ENCODE measurements at regions of chr17 and their contacts with region 1.

Region 1: DNA sequence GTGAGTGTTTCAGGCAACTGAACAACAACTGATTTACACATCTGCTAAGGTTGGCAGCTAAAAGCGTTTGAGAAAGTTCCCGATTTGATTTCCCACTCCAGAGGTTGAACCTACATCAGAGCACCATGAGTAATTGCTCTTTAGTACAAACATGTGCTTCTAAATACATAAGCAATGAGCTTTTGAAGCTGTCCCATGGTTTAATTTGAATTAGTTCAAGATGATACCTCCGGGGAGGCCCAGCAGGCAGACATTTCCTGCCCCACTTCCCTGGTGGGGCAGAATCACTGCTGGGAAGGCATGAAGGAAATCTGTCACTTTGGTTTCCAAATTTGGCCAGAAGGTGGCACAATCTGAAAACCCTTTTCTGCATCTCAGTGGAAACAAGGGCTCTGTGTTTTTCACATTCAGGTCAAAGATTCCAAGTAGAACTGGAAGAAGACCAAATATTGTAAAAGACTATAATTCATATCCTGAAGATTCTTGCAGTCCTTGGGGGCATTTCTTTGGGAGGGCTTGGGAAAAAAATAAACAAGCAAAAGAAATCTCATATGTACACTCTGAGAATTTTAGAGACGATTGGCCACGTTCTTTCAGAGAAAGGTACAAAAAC is 176.2 kb upstream of the FAM20A start:
- DNase-seq: peak; percentile 88
- ATAC-seq: peak; percentile 78
- H3K4me3 ChIP-seq: peak overlapping the region; percentile 24 to 58 (median 43); a peak in 5 of 6 replicates
- H3K27ac ChIP-seq: peak overlapping the region; percentile 75
- H3K4me1 ChIP-seq: peaks cover 63% of the 10 kb centered on the region
- H3K27me3 ChIP-seq: no peaks in the 10 kb centered on the region
- CTCF ChIP-seq: peak; percentile 92
- EP300 ChIP-seq: peak in 1 of 2 experiments; percentile 53; a peak in 1 of 4 replicates
- POLR2A ChIP-seq: no peak
- RAD21 ChIP-seq: peak; percentile 93

Region 2: DNA sequence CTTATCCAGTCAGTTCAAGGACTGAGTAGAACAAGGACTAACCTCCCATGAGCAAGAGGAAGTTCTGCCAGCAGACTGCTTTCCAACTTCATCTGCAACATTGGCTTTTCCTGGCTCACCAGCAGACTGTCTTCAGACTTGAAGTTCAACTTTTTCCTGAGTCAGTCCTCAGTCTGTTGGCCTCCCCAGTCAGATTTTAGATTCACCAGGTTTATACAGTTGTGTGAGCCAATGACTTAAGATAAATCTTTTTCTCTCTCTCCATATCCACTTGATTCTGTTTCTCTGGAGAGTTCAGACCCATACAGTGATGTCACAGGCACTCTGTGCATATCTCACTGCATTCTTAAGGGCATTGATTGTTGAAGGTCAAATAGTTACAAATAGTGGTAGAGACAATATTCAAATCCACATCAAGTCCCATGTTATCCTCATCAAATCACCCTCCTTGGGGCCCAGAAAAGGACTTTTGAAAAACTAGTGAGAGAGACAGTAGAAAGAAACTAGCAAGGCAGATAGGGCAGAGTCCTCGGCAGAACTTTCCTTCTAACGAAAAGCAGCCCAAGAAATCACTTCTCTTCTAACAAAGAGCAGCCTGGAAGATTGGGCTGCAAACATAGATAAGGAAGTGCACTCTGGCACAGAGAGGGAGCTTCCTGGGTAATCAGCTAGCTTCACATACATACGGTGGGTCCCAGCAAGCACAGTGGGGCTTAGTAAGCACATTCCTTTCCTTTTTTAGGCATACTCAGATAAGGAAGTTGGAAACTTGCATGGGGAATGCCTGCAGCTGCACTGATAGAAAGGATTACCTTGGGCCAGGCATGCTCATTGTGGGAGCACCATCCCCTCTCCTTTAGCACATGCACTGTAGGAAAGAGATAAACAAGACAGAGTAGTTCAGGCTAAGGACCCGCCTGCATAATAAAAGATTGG is 43.8 kb before region 1 on chr17:
- CTCF ChIA-PET with region 1: no interaction called
- POLR2A ChIA-PET with region 1: no interaction called
- in situ Hi-C with region 1: no loop called
- intact Hi-C with region 1: no loop called
- DNase-seq: peak; percentile 83
- ATAC-seq: peak; percentile 98
- H3K4me3 ChIP-seq: no peak overlapping the region
- H3K27ac ChIP-seq: no peak overlapping the region
- H3K4me1 ChIP-seq: peaks cover 34% of the 10 kb centered on the region
- H3K27me3 ChIP-seq: no peaks in the 10 kb centered on the region; a peak in 1 of 5 replicates
- CTCF ChIP-seq: no peak
- EP300 ChIP-seq: 0 out of 4 replicates have a peak, but pooled peaks of 1 of the 2 experiments have one; percentile 39
- POLR2A ChIP-seq: no peak
- RAD21 ChIP-seq: no peak

Region 3: GRCh38 chr17:68759343-68760132 is 17.8 kb before region 1 on chr17:
- CTCF ChIA-PET with region 1: no interaction called
- POLR2A ChIA-PET with region 1: no interaction called
- in situ Hi-C with region 1: no loop called
- intact Hi-C with region 1: no loop called
- DNase-seq: peak; percentile 91
- ATAC-seq: peak; percentile 99
- H3K4me3 ChIP-seq: peak overlapping the region; percentile 60 to 67 (median 61)
- H3K27ac ChIP-seq: peak overlapping the region; percentile 92
- H3K4me1 ChIP-seq: peaks cover 35% of the 10 kb centered on the region
- H3K27me3 ChIP-seq: 0 out of 5 replicates have a peak, but pooled peaks cover 0 to 4% of the 10 kb centered on the region in 2 experiments
- CTCF ChIP-seq: peak; percentile 97
- EP300 ChIP-seq: peak in 1 of 2 experiments; percentile 58; a peak in 2 of 4 replicates
- POLR2A ChIP-seq: peak; percentile 63 to 90; a peak in 3 of 4 replicates
- RAD21 ChIP-seq: peak; percentile 97

Region 4: GRCh38 chr17:68821860-68822696 is 44.7 kb after region 1 on chr17:
- CTCF ChIA-PET with region 1: interaction called, 3 read pairs
- POLR2A ChIA-PET with region 1: interaction called, 32 read pairs
- in situ Hi-C with region 1: no loop called
- intact Hi-C with region 1: loop called (anchors 1 kb)
- DNase-seq: peak; percentile 99
- ATAC-seq: peak; percentile 85
- H3K4me3 ChIP-seq: peak overlapping the region in 2 of 3 experiments; percentile 53 to 57; a peak in 3 of 6 replicates
- H3K27ac ChIP-seq: peak overlapping the region; percentile 91
- H3K4me1 ChIP-seq: peaks cover 79% of the 10 kb centered on the region
- H3K27me3 ChIP-seq: no peaks in the 10 kb centered on the region
- CTCF ChIP-seq: no peak
- EP300 ChIP-seq: peak; percentile 81 to 97; a peak in 3 of 4 replicates
- POLR2A ChIP-seq: no peak
- RAD21 ChIP-seq: no peak

Region 5: GRCh38 chr17:68909066-68909465 is 131.7 kb after region 1 on chr17:
- CTCF ChIA-PET with region 1: interaction called, 15 read pairs
- POLR2A ChIA-PET with region 1: interaction called, 8 read pairs
- in situ Hi-C with region 1: loop called (anchors 5 kb)
- intact Hi-C with region 1: loop called (anchors 1 kb)
- DNase-seq: peak; percentile 16
- ATAC-seq: no peak
- H3K4me3 ChIP-seq: no peak overlapping the region
- H3K27ac ChIP-seq: peak overlapping the region; percentile 72
- H3K4me1 ChIP-seq: peaks cover 54% of the 10 kb centered on the region
- H3K27me3 ChIP-seq: no peaks in the 10 kb centered on the region
- CTCF ChIP-seq: no peak
- EP300 ChIP-seq: no peak
- POLR2A ChIP-seq: no peak
- RAD21 ChIP-seq: no peak

Region 6: DNA sequence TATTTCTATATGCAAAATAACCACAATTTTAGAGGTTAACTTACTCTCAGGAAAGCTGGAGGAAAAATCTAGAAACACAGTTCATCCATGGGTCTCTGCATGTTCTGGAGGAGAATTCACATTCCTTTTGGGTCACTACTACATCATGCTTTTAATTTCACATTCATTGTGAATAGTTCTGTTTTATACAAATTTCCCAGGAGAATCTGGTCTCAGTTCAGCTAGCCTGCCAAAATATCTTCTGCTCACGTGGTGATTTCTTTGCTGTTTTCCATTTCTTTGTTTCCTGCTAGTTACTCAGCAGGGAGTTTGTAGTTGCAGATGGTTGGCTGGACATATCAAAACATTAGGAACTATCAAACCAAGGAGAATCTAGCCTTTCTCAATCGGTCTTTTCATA is 283.5 kb after region 1 on chr17 and contains the start of gene ABCA9:
- CTCF ChIA-PET with region 1: interaction called, 4 read pairs
- POLR2A ChIA-PET with region 1: no interaction called
- in situ Hi-C with region 1: loop called (anchors 25 kb)
- intact Hi-C with region 1: no loop called
- DNase-seq: no peak
- ATAC-seq: no peak
- H3K4me3 ChIP-seq: no peak within 1 kb of the TSS
- H3K27ac ChIP-seq: no peak within 1 kb of the TSS
- H3K4me1 ChIP-seq: peaks cover 16% of the 10 kb centered on the region
- H3K27me3 ChIP-seq: no peaks in the 10 kb centered on the region
- CTCF ChIP-seq: no peak
- EP300 ChIP-seq: no peak
- POLR2A ChIP-seq: no peak
- RAD21 ChIP-seq: no peak
- total RNA-seq, gene ABCA9: 0.04 TPM in 1 of 2 replicates, not detected in the other